Activated CD4-positive, alpha-beta memory T cell treated with anti-CD3 and anti-CD28 coated beads, Interleukin-2, amount 10 ng/mL, durations not matched to agents 7 days and 5 days (primary cell): ENCODE measurements at regions of chr1 and their contacts with region 1.

Region 1: GRCh38 chr1:224182866-224183590 is at the start of gene DEGS1:
- DNase-seq: peak; percentile 88
- H3K4me3 Mint-ChIP-seq: peak within 1 kb of the TSS; percentile 93
- H3K27ac Mint-ChIP-seq: peak within 1 kb of the TSS; percentile 90
- H3K4me1 Mint-ChIP-seq: peaks cover 49% of the 10 kb centered on the region
- H3K27me3 Mint-ChIP-seq: no peaks in the 10 kb centered on the region
- total RNA-seq, gene DEGS1: 69.2 to 69.5 TPM

Region 2: DNA sequence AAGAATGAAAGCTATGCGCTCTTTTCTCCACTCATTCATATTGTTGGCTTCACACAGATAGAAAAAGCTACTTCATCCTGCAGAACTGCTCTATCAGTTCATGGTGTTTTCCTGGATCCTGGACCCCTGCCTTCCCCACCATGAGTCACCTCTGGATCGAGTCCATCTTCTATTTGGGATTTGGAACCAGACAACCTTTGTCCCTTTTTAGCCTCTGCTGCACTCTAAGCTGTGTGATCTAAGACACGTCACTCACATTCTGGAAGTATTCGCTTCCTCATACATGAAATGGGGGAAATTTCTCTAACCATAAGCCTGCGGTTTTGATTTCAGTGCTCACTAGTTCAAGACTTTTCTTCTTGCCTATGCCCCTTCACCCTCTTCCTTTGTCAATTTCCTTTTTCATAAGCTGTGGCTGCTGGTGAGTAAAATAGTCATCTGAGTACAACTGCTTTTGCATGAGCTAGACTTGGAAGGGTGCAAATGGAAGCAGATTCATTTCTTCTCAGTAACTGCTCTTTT is 14.1 kb before region 1 on chr1:
- CTCF ChIA-PET with region 1: interaction called, 10 read pairs
- POLR2A ChIA-PET with region 1: interaction called, 48 read pairs
- DNase-seq: no peak
- H3K4me3 Mint-ChIP-seq: peak overlapping the region; percentile 1
- H3K27ac Mint-ChIP-seq: peak overlapping the region; percentile 63
- H3K4me1 Mint-ChIP-seq: peaks cover 34% of the 10 kb centered on the region
- H3K27me3 Mint-ChIP-seq: peaks cover 2% of the 10 kb centered on the region

Region 3: GRCh38 chr1:224245188-224245587 is 62.2 kb after region 1 on chr1:
- CTCF ChIA-PET with region 1: interaction called, 3 read pairs
- POLR2A ChIA-PET with region 1: interaction called, 10 read pairs
- DNase-seq: peak; percentile 60
- H3K4me3 Mint-ChIP-seq: no peak overlapping the region
- H3K27ac Mint-ChIP-seq: peak overlapping the region; percentile 88
- H3K4me1 Mint-ChIP-seq: peaks cover 23% of the 10 kb centered on the region
- H3K27me3 Mint-ChIP-seq: no peaks in the 10 kb centered on the region

Region 4: GRCh38 chr1:224259936-224260335 is 76.9 kb after region 1 on chr1:
- CTCF ChIA-PET with region 1: no interaction called
- POLR2A ChIA-PET with region 1: interaction called, 21 read pairs
- DNase-seq: no peak
- H3K4me3 Mint-ChIP-seq: no peak overlapping the region
- H3K27ac Mint-ChIP-seq: no peak overlapping the region
- H3K4me1 Mint-ChIP-seq: peaks cover 36% of the 10 kb centered on the region
- H3K27me3 Mint-ChIP-seq: no peaks in the 10 kb centered on the region

Region 5: GRCh38 chr1:224329842-224330753 is 147.1 kb after region 1 on chr1 and contains the start of gene NVL:
- CTCF ChIA-PET with region 1: interaction called, 6 read pairs
- POLR2A ChIA-PET with region 1: interaction called, 19 read pairs
- DNase-seq: peak; percentile 83
- H3K4me3 Mint-ChIP-seq: peak within 1 kb of the TSS; percentile 88
- H3K27ac Mint-ChIP-seq: peak within 1 kb of the TSS; percentile 94
- H3K4me1 Mint-ChIP-seq: peaks cover 58% of the 10 kb centered on the region
- H3K27me3 Mint-ChIP-seq: no peaks in the 10 kb centered on the region
- total RNA-seq, gene NVL: 38.8 to 45.6 TPM

Region 6: GRCh38 chr1:224434691-224435317 is 251.8 kb after region 1 on chr1 and contains the start of gene WDR26:
- CTCF ChIA-PET with region 1: no interaction called
- POLR2A ChIA-PET with region 1: interaction called, 11 read pairs
- DNase-seq: peak; percentile 88
- H3K4me3 Mint-ChIP-seq: peak within 1 kb of the TSS; percentile 93
- H3K27ac Mint-ChIP-seq: peak within 1 kb of the TSS; percentile 95
- H3K4me1 Mint-ChIP-seq: peaks cover 54% of the 10 kb centered on the region
- H3K27me3 Mint-ChIP-seq: no peaks in the 10 kb centered on the region
- total RNA-seq, gene WDR26: 114 to 118 TPM